ENCODE measurements at regions of chr7 and their contacts with region 1.

Region 1: GRCh38 chr7:70614237-70615045 is 517.5 kb upstream of the GALNT17 start:
- DNase-seq: peak; percentile 90 to 94
- ATAC-seq: peak; percentile 87
- H3K4me3 ChIP-seq: no peak overlapping the region
- H3K27ac ChIP-seq: no peak overlapping the region
- H3K4me1 ChIP-seq: no peaks in the 10 kb centered on the region
- H3K27me3 ChIP-seq: no peaks in the 10 kb centered on the region

Region 2: GRCh38 chr7:70426249-70426880 is 188.1 kb before region 1 on chr7:
- intact Hi-C with region 1: loop called in 1 of 2 experiments (anchors 10 kb)
- DNase-seq: no peak
- ATAC-seq: no peak
- H3K4me3 ChIP-seq: no peak overlapping the region
- H3K27ac ChIP-seq: no peak overlapping the region
- H3K4me1 ChIP-seq: no peaks in the 10 kb centered on the region
- H3K27me3 ChIP-seq: no peaks in the 10 kb centered on the region

Region 3: DNA sequence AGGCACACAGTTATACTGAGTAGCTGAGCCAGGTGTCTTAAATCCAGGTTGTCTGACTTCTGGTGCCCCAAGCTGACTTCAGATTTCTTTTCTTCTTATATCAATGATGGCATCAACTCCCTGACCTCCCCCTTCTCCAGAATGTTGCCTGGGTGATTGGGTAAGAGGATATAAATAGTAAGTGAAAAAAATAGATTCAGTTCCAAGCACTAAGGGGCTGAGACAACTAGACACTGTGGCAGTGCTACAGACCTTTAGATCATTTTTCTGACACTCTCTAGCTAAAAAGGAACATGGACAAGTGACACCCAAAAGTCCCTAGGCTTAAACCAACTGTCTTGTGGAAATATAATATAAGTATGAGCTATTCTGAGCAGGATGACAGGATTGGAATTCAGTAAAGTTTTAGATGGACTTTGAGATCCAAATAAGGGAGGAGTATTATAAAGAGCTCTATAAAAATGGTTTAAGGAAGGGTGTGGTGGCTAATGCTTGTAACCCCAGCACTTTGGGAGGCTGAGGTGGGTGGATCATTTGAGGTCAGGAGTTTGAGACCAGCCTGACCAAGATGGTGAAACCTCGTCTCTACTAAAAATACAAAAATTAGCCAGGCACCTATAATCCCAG is 71.6 kb before region 1 on chr7:
- intact Hi-C with region 1: loop called in 1 of 2 experiments (anchors 10 kb)
- DNase-seq: no peak
- ATAC-seq: no peak
- H3K4me3 ChIP-seq: no peak overlapping the region
- H3K27ac ChIP-seq: no peak overlapping the region
- H3K4me1 ChIP-seq: peaks cover 0 to 12% of the 10 kb centered on the region in 2 donors
- H3K27me3 ChIP-seq: no peaks in the 10 kb centered on the region